HCT116 (cell line): ENCODE measurements at regions of chr16 and their contacts with region 1.

Region 1: GRCh38 chr16:55257966-55258613 is 65.9 kb upstream of the IRX6 start:
- DNase-seq: peak; percentile 58
- ATAC-seq: peak; percentile 98
- H3K4me3 ChIP-seq: no peak overlapping the region
- H3K27ac ChIP-seq: no peak overlapping the region
- H3K4me1 ChIP-seq: no peaks in the 10 kb centered on the region
- H3K27me3 ChIP-seq: peaks cover 4% of the 10 kb centered on the region; the same call in 1 of the 2 replicates
- CTCF ChIP-seq: peak; percentile 65 to 95 (median 95)
- POLR2A ChIP-seq: no peak
- RAD21 ChIP-seq: peak; percentile 87

Region 2: GRCh38 chr16:53549970-53550690 is 1708.0 kb before region 1 on chr16:
- CTCF ChIA-PET with region 1: interaction called, 9 read pairs
- POLR2A ChIA-PET with region 1: no interaction called
- RAD21 ChIA-PET with region 1: no interaction called
- intact Hi-C with region 1: loop called (anchors 2 kb)
- DNase-seq: peak; percentile 46
- ATAC-seq: peak; percentile 86
- H3K4me3 ChIP-seq: no peak overlapping the region
- H3K27ac ChIP-seq: no peak overlapping the region
- H3K4me1 ChIP-seq: peaks cover 0 to 9% of the 10 kb centered on the region in 2 experiments; a peak in 2 of 4 replicates
- H3K27me3 ChIP-seq: no peaks in the 10 kb centered on the region
- CTCF ChIP-seq: peak; percentile 59 to 82 (median 61); a peak in 5 of 6 replicates
- POLR2A ChIP-seq: no peak
- RAD21 ChIP-seq: peak; percentile 89

Region 3: GRCh38 chr16:53945996-53946395 is 1312.1 kb before region 1 on chr16:
- CTCF ChIA-PET with region 1: no interaction called
- POLR2A ChIA-PET with region 1: no interaction called
- RAD21 ChIA-PET with region 1: no interaction called
- intact Hi-C with region 1: loop called (anchors 1 kb)
- DNase-seq: peak; percentile 8
- ATAC-seq: peak; percentile 65; the same call in 1 of the 2 replicates
- H3K4me3 ChIP-seq: no peak overlapping the region
- H3K27ac ChIP-seq: no peak overlapping the region
- H3K4me1 ChIP-seq: no peaks in the 10 kb centered on the region
- H3K27me3 ChIP-seq: no peaks in the 10 kb centered on the region
- CTCF ChIP-seq: peak; percentile 36 to 86 (median 66); a peak in 5 of 6 replicates
- POLR2A ChIP-seq: no peak
- RAD21 ChIP-seq: peak; percentile 68

Region 4: DNA sequence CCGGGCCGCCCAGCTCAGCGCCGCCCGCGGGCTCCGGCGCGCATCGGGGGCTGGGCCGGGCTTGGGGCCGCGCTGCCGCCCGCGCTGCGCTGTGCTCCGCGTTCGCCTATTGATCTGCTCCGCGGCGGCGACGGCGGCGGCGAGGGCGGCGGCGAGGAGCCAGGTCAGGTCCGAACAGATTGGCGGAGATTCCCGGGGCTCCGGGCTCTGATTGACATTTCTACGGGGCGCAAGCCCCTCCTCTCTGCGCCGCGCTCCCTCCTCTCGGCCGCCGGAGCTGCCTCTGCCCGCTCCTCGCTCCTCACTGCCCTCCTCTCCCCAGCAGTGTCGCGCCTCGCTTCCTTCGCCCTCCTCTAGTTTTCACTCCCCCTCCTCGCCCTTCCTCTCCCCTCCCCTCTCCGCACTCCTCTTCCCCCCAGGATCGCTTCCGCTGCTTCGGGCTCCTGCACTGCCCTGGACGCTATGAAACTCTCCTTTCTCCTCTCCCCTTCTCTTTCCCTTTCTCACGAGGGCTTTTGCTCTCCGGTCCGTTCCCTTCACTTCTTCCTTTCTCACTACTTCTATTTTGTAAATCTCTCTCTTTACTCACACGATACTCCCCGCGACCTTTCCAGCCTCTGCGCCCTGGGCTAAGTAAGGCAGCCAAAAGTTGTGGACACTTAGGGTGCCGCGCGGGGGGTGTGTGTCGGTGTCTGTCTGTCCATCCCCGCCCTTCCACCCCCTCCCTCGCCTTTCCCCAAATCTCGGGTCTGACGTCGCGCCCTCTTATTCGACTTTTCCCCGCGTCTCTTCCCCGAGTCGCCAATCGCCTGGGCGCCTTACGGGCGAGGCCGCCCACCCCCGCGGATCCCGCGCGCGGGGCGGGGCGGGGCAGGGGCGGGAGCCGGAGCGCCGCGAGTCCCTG is 971.7 kb before region 1 on chr16 and contains the start of gene IRX3:
- CTCF ChIA-PET with region 1: no interaction called
- POLR2A ChIA-PET with region 1: no interaction called
- RAD21 ChIA-PET with region 1: interaction called in 1 of 2 experiments, 3 read pairs
- intact Hi-C with region 1: loop called (anchors 5 kb)
- DNase-seq: peak; percentile 66
- ATAC-seq: peak; percentile 90
- H3K4me3 ChIP-seq: peak within 1 kb of the TSS; percentile 56 to 71
- H3K27ac ChIP-seq: peak within 1 kb of the TSS; percentile 60; the same call in 1 of the 2 replicates
- H3K4me1 ChIP-seq: peaks cover 7 to 22% of the 10 kb centered on the region in 2 experiments
- H3K27me3 ChIP-seq: no peaks in the 10 kb centered on the region
- CTCF ChIP-seq: no peak
- POLR2A ChIP-seq: no peak
- RAD21 ChIP-seq: no peak
- total RNA-seq, gene IRX3: 2.0 TPM

Region 5: GRCh38 chr16:54822492-54822891 is 435.6 kb before region 1 on chr16:
- CTCF ChIA-PET with region 1: no interaction called
- POLR2A ChIA-PET with region 1: no interaction called
- RAD21 ChIA-PET with region 1: no interaction called
- intact Hi-C with region 1: loop called (anchors 10 kb)
- DNase-seq: no peak
- ATAC-seq: no peak
- H3K4me3 ChIP-seq: no peak overlapping the region
- H3K27ac ChIP-seq: no peak overlapping the region
- H3K4me1 ChIP-seq: no peaks in the 10 kb centered on the region
- H3K27me3 ChIP-seq: no peaks in the 10 kb centered on the region
- CTCF ChIP-seq: no peak
- POLR2A ChIP-seq: no peak
- RAD21 ChIP-seq: no peak

Region 6: GRCh38 chr16:54974367-54974766 is 283.7 kb before region 1 on chr16:
- CTCF ChIA-PET with region 1: no interaction called
- POLR2A ChIA-PET with region 1: no interaction called
- RAD21 ChIA-PET with region 1: no interaction called
- intact Hi-C with region 1: no loop called
- DNase-seq: no peak
- ATAC-seq: no peak
- H3K4me3 ChIP-seq: no peak overlapping the region
- H3K27ac ChIP-seq: no peak overlapping the region
- H3K4me1 ChIP-seq: no peaks in the 10 kb centered on the region
- H3K27me3 ChIP-seq: no peaks in the 10 kb centered on the region; the same call in 1 of the 2 replicates
- CTCF ChIP-seq: no peak
- POLR2A ChIP-seq: no peak
- RAD21 ChIP-seq: no peak

Region 7: GRCh38 chr16:55035029-55035428 is 223.1 kb before region 1 on chr16:
- CTCF ChIA-PET with region 1: interaction called, 12 read pairs
- POLR2A ChIA-PET with region 1: no interaction called
- RAD21 ChIA-PET with region 1: no interaction called
- intact Hi-C with region 1: loop called (anchors 1 kb)
- DNase-seq: peak; percentile 19
- ATAC-seq: peak; percentile 89
- H3K4me3 ChIP-seq: no peak overlapping the region
- H3K27ac ChIP-seq: no peak overlapping the region
- H3K4me1 ChIP-seq: peaks cover 0 to 11% of the 10 kb centered on the region in 2 experiments; a peak in 2 of 4 replicates
- H3K27me3 ChIP-seq: no peaks in the 10 kb centered on the region
- CTCF ChIP-seq: peak; percentile 33 to 78 (median 73); a peak in 4 of 6 replicates
- POLR2A ChIP-seq: no peak
- RAD21 ChIP-seq: peak; percentile 59

Region 8: GRCh38 chr16:55297062-55297909 is 39.2 kb after region 1 on chr16:
- CTCF ChIA-PET with region 1: no interaction called
- POLR2A ChIA-PET with region 1: no interaction called
- RAD21 ChIA-PET with region 1: no interaction called
- intact Hi-C with region 1: no loop called
- DNase-seq: no peak
- ATAC-seq: no peak
- H3K4me3 ChIP-seq: no peak overlapping the region
- H3K27ac ChIP-seq: no peak overlapping the region
- H3K4me1 ChIP-seq: peaks cover 0 to 13% of the 10 kb centered on the region in 2 experiments; a peak in 1 of 4 replicates
- H3K27me3 ChIP-seq: peaks cover 35% of the 10 kb centered on the region
- CTCF ChIP-seq: no peak
- POLR2A ChIP-seq: no peak
- RAD21 ChIP-seq: no peak